GM12878 (cell line): ENCODE measurements at regions of chr6 and their contacts with region 1.

Region 1: DNA sequence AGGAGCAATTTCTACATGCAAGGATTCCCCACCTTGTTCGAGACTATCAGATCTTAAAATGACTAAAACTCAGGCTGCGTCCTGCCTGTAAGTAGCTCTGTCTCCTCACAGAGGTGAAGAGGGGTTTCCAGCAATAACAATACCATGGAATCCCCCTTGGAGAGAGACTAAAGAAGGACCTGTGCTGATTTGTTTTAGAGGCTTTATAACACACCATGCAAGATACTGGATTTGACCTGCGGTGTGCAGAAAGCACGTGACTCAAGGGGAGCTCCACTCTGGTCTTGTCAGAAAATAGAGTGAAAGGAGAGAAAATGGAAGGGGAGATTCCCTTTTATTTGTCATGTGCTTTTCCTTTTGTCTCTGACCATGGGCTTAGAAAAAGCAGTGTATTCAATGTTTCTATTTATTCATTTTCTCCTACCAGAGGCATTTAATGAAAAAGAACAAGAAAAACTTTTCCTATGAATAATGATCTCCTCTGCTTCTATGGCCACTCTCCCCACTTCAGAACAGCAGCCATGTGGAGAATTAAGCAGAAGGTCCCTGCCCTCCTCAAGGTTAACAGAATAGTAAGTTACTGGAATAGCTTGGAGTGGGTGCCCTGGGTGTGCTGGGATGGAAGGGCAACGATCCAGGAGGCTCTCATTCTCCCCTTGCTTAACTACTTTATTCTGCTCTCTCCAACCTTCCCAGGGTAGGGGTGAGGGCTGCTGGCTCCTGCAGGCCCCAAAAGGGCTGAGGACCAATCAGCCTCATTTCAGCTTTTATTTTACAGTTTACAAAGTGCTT is 19.2 kb upstream of the MRPS10 start:
- DNase-seq: peak; percentile 41
- ATAC-seq: peak; percentile 90
- H3K4me3 ChIP-seq: peak overlapping the region; percentile 23; the same call in 1 of the 2 replicates
- H3K27ac ChIP-seq: peak overlapping the region; percentile 68
- H3K4me1 ChIP-seq: peaks cover 36% of the 10 kb centered on the region
- H3K27me3 ChIP-seq: no peaks in the 10 kb centered on the region
- CTCF ChIP-seq: no peak
- EP300 ChIP-seq: peak; percentile 8 to 26; a peak in 2 of 4 replicates
- POLR2A ChIP-seq: no peak
- RAD21 ChIP-seq: peak; percentile 10; the same call in 1 of the 2 replicates

Region 2: DNA sequence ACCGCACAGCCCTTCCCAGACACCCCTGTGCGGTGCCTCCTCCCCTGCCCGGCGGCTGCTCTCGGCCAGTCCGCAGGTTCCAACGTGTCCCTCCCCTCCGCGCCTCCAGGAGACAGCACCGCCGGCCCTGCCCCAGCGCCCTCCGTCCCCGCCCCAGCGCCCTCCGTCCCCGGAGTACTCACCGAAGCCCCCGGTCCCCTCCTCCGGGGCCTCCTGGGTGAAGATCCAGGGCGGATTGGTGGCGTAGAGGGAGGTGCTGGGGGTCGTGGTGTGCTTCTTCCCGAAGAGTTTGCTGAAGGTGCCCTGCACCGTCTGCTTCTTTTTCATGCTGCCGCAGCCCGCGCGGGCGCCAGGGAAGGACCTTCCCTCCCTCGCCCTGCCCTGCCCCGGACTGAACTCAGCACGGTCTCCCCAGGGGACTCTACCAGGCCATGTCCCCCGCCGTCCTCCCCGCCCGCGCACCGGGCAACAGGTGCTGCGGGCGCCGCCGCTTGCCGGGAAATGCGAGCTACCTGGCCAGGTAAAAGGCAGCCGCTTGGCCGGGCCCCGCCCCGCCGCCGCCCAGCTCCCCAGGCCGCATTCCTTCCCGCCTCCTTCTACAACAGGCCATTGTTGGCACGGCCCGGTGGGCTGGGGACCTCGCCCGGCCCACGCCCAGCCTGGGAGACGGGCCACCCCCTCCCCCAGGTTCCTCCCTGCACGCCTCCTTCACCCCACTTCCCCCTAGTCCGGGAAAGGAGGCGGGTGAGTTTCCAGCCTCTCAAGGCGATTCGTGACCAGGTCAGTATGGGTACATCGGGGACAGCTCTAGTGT is 94.6 kb before region 1 on chr6 and contains the start of gene C6orf132:
- CTCF ChIA-PET with region 1: no interaction called
- POLR2A ChIA-PET with region 1: no interaction called
- RAD21 ChIA-PET with region 1: no interaction called
- SMC1A ChIA-PET with region 1: no interaction called
- in situ Hi-C with region 1: no loop called
- intact Hi-C with region 1: no loop called
- DNase-seq: no peak
- ATAC-seq: no peak
- H3K4me3 ChIP-seq: no peak within 1 kb of the TSS
- H3K27ac ChIP-seq: no peak within 1 kb of the TSS
- H3K4me1 ChIP-seq: no peaks in the 10 kb centered on the region
- H3K27me3 ChIP-seq: peaks cover 3 to 5% of the 10 kb centered on the region in 2 experiments
- CTCF ChIP-seq: no peak
- EP300 ChIP-seq: no peak
- POLR2A ChIP-seq: no peak
- RAD21 ChIP-seq: no peak
- polyA plus RNA-seq, gene C6orf132: not detected

Region 3: DNA sequence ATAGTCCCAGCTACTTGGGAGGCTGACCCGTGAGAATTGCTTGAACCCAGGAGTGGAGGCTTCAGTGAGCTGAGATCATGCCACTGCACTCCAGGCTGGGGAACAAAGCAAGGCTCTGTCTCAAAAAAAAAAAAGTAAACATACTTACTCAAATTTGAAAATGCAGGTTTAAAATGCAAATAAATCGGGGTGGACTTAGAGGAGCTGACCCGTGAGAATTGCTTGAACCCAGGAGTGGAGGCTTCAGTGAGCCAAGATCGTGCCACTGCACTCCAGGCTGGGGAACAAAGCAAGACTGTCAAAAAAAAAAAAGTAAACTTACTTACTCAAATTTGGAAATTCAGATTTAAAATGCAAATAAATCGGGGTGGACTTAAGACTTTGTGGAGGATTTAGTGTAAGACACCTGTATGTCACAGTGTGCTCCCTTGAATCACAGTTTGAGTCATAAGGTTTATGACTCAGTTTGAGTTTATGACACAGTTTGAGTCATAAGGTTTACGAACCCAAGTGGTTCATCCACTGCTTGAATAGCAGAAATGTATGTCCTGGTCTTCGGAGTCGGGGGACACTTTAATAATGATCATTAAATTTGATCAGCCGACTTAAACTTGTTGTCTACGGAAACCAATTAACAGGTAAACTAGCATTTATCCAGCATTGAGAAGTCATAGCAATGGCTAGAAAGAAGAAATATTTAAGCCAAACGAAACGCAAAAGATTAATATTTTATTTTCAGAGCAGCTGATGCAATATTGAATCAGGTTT is 12.5 kb before region 1 on chr6:
- CTCF ChIA-PET with region 1: interaction called, 4 read pairs
- POLR2A ChIA-PET with region 1: interaction called, 14 read pairs
- RAD21 ChIA-PET with region 1: interaction called, 18 read pairs
- SMC1A ChIA-PET with region 1: interaction called, 31 read pairs
- in situ Hi-C with region 1: no loop called
- intact Hi-C with region 1: no loop called
- DNase-seq: peak; percentile 94
- ATAC-seq: peak; percentile 94
- H3K4me3 ChIP-seq: no peak overlapping the region
- H3K27ac ChIP-seq: no peak overlapping the region
- H3K4me1 ChIP-seq: no peaks in the 10 kb centered on the region; the same call in 1 of the 2 replicates
- H3K27me3 ChIP-seq: no peaks in the 10 kb centered on the region
- CTCF ChIP-seq: no peak
- EP300 ChIP-seq: peak; percentile 71 to 96
- POLR2A ChIP-seq: no peak
- RAD21 ChIP-seq: no peak